ENCODE measurements at regions of chr7 and their contacts with region 1.

Region 1: GRCh38 chr7:84746353-84746752 is 440.5 kb downstream of the SEMA3D start:
- DNase-seq: no peak
- H3K4me3 ChIP-seq: no peak overlapping the region
- H3K27ac ChIP-seq: no peak overlapping the region
- H3K4me1 ChIP-seq: no peaks in the 10 kb centered on the region
- H3K27me3 ChIP-seq: no peaks in the 10 kb centered on the region
- CTCF ChIP-seq: no peak

Region 2: DNA sequence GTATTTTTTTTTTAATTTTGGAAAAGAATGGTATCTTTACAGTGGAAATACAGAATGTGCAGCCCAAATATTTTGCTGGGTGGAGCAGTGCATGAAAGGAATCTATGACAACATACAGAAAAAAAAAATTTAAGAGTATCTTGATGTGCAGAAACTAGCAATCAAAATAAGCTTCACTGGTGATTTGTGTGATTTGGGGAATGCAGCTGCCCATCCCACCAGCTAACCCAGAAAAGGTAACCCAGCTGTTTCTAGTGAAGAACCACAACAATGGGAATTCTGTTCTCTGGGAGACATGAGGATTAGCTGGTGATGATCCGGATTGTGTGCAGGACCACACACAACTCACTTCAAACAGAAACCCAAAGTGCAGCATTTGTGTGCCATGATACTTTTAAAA is 65.0 kb after region 1 on chr7:
- CTCF ChIA-PET with region 1: no interaction called
- POLR2A ChIA-PET with region 1: interaction called, 24 read pairs
- intact Hi-C with region 1: no loop called
- DNase-seq: no peak
- H3K4me3 ChIP-seq: no peak overlapping the region
- H3K27ac ChIP-seq: no peak overlapping the region
- H3K4me1 ChIP-seq: no peaks in the 10 kb centered on the region
- H3K27me3 ChIP-seq: no peaks in the 10 kb centered on the region
- CTCF ChIP-seq: no peak

Measured in PC-9 (cell line).